ENCODE measurements at regions of chr20 and their contacts with region 1.

Region 1: DNA sequence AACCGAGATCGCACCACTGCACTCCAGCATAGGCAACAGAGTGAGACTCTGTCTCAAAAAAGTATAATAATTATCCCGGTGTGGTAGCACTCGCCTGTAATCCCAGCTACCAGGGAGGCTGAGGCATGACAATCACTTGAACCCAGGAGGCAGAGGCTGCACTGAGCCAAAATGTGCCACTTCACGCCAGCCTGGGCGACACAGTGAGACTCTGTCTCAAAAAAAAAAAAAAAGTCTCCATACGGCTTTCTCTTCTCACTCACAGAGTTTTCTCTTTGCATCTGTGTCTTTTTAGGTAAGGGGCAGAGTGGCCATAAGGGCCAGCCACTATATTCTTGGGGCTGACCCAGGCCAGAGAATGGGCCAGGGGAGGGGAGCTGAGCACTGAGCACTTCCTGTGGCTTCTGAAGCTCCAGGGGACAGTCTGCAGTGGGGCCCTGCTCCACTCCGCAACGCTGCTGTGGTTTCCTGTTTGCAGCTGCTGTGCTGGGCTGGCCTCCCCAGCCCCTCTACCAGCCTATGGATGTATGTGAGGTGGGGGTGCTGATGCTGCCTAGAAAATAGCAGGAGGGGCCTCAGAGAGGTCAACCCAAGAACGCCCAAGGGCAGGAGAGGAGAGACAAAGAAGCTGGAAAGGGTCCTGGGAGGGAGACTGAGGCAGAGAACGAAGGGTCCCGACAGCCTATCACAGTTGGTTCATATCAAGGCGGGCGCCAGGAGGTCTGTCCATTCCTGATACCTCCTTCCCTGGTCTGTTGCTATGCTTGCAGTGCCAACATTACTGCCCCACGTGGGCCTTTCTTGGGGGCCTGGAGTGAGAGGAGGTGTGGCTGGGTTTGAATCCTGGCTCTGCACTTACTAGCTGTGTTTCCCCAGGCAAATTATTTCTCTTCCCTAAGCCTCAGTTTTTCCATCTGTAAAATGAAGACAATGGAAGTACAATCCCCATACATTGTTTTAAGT is 16.0 kb downstream of the SLA2 start:
- DNase-seq: peak in 34 of 35 experiments; percentile 8 to 67 (median 42)
- ATAC-seq: peak; percentile 87 to 97 (median 92)
- H3K4me3 ChIP-seq: peak overlapping the region in 1 of 2 donors; percentile 39
- H3K4me3 Mint-ChIP-seq: peak overlapping the region; percentile 73 to 84 (median 78)
- H3K27ac ChIP-seq: peak overlapping the region; percentile 56
- H3K27ac Mint-ChIP-seq: peak overlapping the region; percentile 99 to 100
- H3K4me1 ChIP-seq: peaks cover 5 to 52% of the 10 kb centered on the region in 2 experiments
- H3K4me1 Mint-ChIP-seq: peaks cover 50 to 60% (median 58%) of the 10 kb centered on the region in 3 donors
- H3K27me3 ChIP-seq: no peaks in the 10 kb centered on the region
- H3K27me3 Mint-ChIP-seq: no peaks in the 10 kb centered on the region

Region 2: GRCh38 chr20:36613974-36614373 is 16.0 kb before region 1 on chr20:
- CTCF ChIA-PET with region 1: interaction called, 6 to 10 read pairs
- POLR2A ChIA-PET with region 1: interaction called in 1 of 2 experiments, 10 read pairs
- DNase-seq: no peak
- ATAC-seq: no peak
- H3K4me3 ChIP-seq: no peak overlapping the region
- H3K4me3 Mint-ChIP-seq: no peak overlapping the region
- H3K27ac ChIP-seq: no peak overlapping the region
- H3K27ac Mint-ChIP-seq: peak overlapping the region in 1 of 2 donors; percentile 69
- H3K4me1 ChIP-seq: peaks cover 0 to 9% of the 10 kb centered on the region in 2 experiments
- H3K4me1 Mint-ChIP-seq: peaks cover 11 to 32% (median 12%) of the 10 kb centered on the region in 3 donors
- H3K27me3 ChIP-seq: no peaks in the 10 kb centered on the region
- H3K27me3 Mint-ChIP-seq: no peaks in the 10 kb centered on the region

Measured in T-cell (primary cell).